ENCODE measurements at regions of chr19 and their contacts with region 1.

Region 1: DNA sequence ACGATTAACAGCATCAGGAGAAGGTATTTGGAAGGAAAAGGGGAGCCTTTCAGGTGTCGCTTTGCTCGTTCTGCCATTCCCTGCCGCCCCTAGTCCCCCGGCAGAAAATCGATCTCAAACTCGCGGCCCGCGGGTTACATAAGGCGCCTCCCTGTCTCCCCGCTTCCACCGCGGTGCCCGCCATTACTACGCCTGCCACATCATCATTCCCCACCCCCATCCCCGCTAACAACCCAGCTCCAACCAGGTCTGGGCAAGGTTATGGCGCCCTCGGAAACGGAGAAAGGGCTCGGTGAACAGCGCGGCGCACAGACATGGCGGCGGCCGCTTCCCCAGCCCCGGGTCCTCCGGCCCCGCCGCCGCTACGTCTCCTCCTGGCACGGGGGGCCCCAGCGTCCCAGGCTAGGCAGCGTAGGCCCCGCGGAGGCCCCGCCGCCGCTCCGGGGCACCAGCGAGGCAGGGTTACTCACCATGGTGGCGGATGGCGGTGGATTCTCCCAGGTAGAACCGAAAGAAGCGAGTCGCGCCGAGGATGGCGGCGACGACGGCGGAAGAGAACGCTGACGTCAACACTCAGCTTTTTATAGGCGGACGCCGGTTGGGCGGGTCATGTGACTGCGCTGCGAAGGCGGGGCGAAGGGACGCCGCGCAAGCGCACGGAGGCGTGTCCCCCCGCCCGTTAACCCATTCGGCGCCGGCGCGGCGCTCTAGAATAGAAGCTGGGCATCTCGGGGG is at the start of gene EEF2:
- DNase-seq: peak; percentile 97
- H3K27ac ChIP-seq: peak within 1 kb of the TSS; percentile 88
- CTCF ChIP-seq: no peak

Region 2: DNA sequence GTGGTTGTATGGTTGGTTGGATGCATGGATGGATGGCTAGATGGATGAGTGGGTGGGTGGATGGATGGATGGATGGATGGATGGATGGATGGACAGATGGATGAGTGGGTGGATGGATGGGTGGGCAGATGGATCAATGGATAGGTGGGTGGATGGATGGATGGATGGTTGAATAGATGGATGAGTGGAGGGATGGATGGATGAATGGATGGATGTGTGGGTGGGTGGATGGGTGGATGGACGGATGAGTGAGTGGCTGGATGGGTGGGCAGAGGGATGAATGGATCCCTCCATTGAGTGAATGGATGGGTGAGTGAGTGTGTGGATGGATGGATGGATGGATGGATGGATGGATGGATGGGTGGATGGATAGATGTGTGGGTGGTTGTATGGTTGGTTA is 61.2 kb before region 1 on chr19:
- CTCF ChIA-PET with region 1: no interaction called
- POLR2A ChIA-PET with region 1: no interaction called
- DNase-seq: no peak
- H3K27ac ChIP-seq: no peak overlapping the region
- CTCF ChIP-seq: no peak

Region 3: GRCh38 chr19:3970808-3971598 is 14.1 kb before region 1 on chr19 and contains the start of gene DAPK3:
- CTCF ChIA-PET with region 1: interaction called, 5 read pairs
- POLR2A ChIA-PET with region 1: interaction called, 15 read pairs
- DNase-seq: peak; percentile 92
- H3K27ac ChIP-seq: peak within 1 kb of the TSS; percentile 92
- CTCF ChIP-seq: no peak

Region 4: GRCh38 chr19:4217429-4218264 is 232.6 kb after region 1 on chr19:
- CTCF ChIA-PET with region 1: interaction called, 3 read pairs
- POLR2A ChIA-PET with region 1: interaction called, 10 read pairs
- DNase-seq: no peak
- H3K27ac ChIP-seq: no peak overlapping the region
- CTCF ChIP-seq: no peak